Panc1 (cell line): ENCODE measurements at regions of chr5 and their contacts with region 1.

Region 1: DNA sequence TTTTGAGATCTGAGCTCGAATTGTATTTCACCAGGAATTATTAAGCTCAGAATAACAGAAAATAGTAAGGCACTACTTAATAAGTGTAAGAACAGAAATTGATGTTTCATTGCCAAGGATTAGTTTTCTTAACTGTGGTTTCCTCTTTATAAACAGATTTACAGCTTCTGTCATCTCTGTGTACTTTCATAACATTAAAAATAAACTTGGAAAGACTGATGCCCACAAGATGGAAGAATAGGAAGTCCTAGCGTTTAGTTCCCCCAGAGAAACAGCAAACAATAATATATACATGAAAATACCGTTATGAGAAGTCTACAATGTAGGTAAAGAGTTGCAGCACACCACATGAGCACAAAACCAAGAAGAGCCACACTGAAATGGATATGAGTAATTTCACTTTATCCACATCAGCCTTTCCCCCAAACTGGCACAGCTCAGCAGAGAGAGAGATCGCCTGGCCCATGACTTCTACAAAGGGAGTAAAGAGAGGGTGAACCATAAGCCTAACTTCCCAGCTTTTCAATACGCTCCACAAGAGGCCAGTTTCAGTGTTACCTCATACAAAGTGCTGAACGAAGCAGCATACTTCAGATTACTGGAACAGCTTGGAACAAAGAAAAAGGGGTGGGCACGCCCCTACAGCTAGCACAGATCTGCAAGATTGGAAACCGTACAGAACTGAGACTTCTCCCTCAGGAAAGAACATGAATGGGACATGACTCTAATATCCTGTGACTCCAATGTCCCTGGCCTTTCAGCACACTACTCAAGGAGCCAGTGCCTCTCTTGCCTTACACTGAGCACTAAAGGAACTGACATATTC is 75.4 kb downstream of the EMB start:
- DNase-seq: no peak
- ATAC-seq: no peak
- H3K4me3 ChIP-seq: no peak overlapping the region
- H3K27ac ChIP-seq: no peak overlapping the region
- H3K4me1 ChIP-seq: no peaks in the 10 kb centered on the region
- H3K27me3 ChIP-seq: no peaks in the 10 kb centered on the region
- CTCF ChIP-seq: no peak

Region 2: GRCh38 chr5:50352382-50352781 is 13.3 kb before region 1 on chr5:
- CTCF ChIA-PET with region 1: interaction called, 11 read pairs
- POLR2A ChIA-PET with region 1: no interaction called
- in situ Hi-C with region 1: no loop called
- intact Hi-C with region 1: no loop called
- DNase-seq: no peak
- ATAC-seq: no peak
- H3K4me3 ChIP-seq: no peak overlapping the region
- H3K27ac ChIP-seq: no peak overlapping the region
- H3K4me1 ChIP-seq: no peaks in the 10 kb centered on the region
- H3K27me3 ChIP-seq: no peaks in the 10 kb centered on the region
- CTCF ChIP-seq: no peak

Region 3: GRCh38 chr5:50406874-50407273 is 41.2 kb after region 1 on chr5:
- CTCF ChIA-PET with region 1: interaction called, 10 read pairs
- POLR2A ChIA-PET with region 1: no interaction called
- in situ Hi-C with region 1: no loop called
- intact Hi-C with region 1: no loop called
- DNase-seq: no peak
- ATAC-seq: no peak
- H3K4me3 ChIP-seq: no peak overlapping the region
- H3K27ac ChIP-seq: no peak overlapping the region
- H3K4me1 ChIP-seq: no peaks in the 10 kb centered on the region
- H3K27me3 ChIP-seq: no peaks in the 10 kb centered on the region
- CTCF ChIP-seq: no peak

Region 4: DNA sequence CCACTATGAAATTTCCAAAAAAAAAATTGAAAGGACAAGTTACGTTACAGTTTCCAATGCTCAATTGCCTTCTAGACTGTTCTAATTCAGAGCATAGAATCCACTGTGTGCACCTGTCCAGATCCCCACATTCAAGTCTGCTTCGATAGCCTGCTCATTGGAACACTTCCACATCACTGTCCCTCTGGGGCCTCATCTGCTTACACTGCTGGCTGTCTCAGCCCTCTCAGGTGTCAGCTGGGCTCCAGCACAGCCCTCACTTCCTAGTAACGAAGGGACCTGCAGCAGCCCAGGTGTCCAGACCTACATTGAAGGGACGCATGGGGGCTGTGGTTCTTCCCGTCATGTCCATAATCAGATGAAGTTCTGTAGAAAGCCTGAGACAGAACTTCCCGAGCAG is 169.8 kb after region 1 on chr5:
- CTCF ChIA-PET with region 1: no interaction called
- POLR2A ChIA-PET with region 1: no interaction called
- in situ Hi-C with region 1: no loop called
- intact Hi-C with region 1: no loop called
- DNase-seq: no peak
- ATAC-seq: no peak
- H3K4me3 ChIP-seq: no peak overlapping the region
- H3K27ac ChIP-seq: no peak overlapping the region
- H3K4me1 ChIP-seq: no peaks in the 10 kb centered on the region
- H3K27me3 ChIP-seq: no peaks in the 10 kb centered on the region
- CTCF ChIP-seq: no peak

Region 5: DNA sequence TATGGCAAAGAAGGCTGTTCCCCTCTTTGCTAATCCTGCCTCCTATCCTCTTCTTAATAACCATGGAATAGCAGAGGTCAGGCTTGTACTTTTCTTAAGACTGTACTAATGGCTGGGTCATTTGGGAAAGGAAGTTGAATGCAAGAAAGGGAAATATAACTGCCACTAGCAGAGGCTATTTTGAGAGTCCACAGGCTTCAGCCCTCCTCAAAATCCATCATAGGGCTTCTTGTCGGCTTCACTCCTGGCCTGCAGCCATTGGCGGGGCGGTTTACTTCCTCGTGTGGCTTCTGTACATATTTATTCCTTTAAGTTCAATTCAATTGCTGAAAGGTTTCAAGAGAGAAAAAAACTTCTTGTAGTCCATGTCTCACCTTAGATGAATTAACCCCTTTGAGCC is 298.0 kb after region 1 on chr5:
- CTCF ChIA-PET with region 1: no interaction called
- POLR2A ChIA-PET with region 1: no interaction called
- in situ Hi-C with region 1: no loop called
- intact Hi-C with region 1: no loop called
- DNase-seq: no peak
- ATAC-seq: no peak
- H3K4me3 ChIP-seq: no peak overlapping the region
- H3K27ac ChIP-seq: no peak overlapping the region
- H3K4me1 ChIP-seq: peaks cover 10% of the 10 kb centered on the region; the same call in 1 of the 2 replicates
- H3K27me3 ChIP-seq: no peaks in the 10 kb centered on the region
- CTCF ChIP-seq: no peak

Region 6: GRCh38 chr5:50697421-50698138 is 331.9 kb after region 1 on chr5:
- CTCF ChIA-PET with region 1: no interaction called
- POLR2A ChIA-PET with region 1: no interaction called
- in situ Hi-C with region 1: no loop called
- intact Hi-C with region 1: no loop called
- DNase-seq: no peak
- ATAC-seq: no peak
- H3K4me3 ChIP-seq: no peak overlapping the region
- H3K27ac ChIP-seq: no peak overlapping the region
- H3K4me1 ChIP-seq: no peaks in the 10 kb centered on the region
- H3K27me3 ChIP-seq: no peaks in the 10 kb centered on the region
- CTCF ChIP-seq: no peak